WTC11 (cell line): ENCODE measurements at regions of chrX and their contacts with region 1.

Region 1: GRCh38 chrX:49155900-49156837 is 6.4 kb upstream of the MAGIX start:
- DNase-seq: peak; percentile 82
- ATAC-seq: peak; percentile 90
- H3K4me3 Mint-ChIP-seq: peak overlapping the region; percentile 80
- H3K27ac Mint-ChIP-seq: peak overlapping the region; percentile 94
- H3K4me1 Mint-ChIP-seq: peaks cover 9% of the 10 kb centered on the region
- H3K27me3 Mint-ChIP-seq: peaks cover 39% of the 10 kb centered on the region
- CTCF ChIP-seq: peak; percentile 31; the same call in 1 of the 2 replicates

Region 2: GRCh38 chrX:49137492-49137891 is 18.7 kb before region 1 on chrX:
- CTCF ChIA-PET with region 1: interaction called, 29 read pairs
- POLR2A ChIA-PET with region 1: no interaction called
- DNase-seq: no peak
- ATAC-seq: no peak
- H3K4me3 Mint-ChIP-seq: no peak overlapping the region
- H3K27ac Mint-ChIP-seq: no peak overlapping the region
- H3K4me1 Mint-ChIP-seq: no peaks in the 10 kb centered on the region
- H3K27me3 Mint-ChIP-seq: peaks cover 3% of the 10 kb centered on the region; the same call in 1 of the 2 replicates
- CTCF ChIP-seq: no peak

Region 3: GRCh38 chrX:49165901-49166881 is 10.0 kb after region 1 on chrX:
- CTCF ChIA-PET with region 1: interaction called, 24 read pairs
- POLR2A ChIA-PET with region 1: interaction called, 5 read pairs
- DNase-seq: peak; percentile 89
- ATAC-seq: peak; percentile 63
- H3K4me3 Mint-ChIP-seq: peak overlapping the region; percentile 66
- H3K27ac Mint-ChIP-seq: 0 out of 2 replicates have a peak overlapping the region, but pooled peaks have one; percentile 58
- H3K4me1 Mint-ChIP-seq: peaks cover 13% of the 10 kb centered on the region
- H3K27me3 Mint-ChIP-seq: peaks cover 65% of the 10 kb centered on the region
- CTCF ChIP-seq: no peak

Region 4: GRCh38 chrX:49184294-49185061 is 28.3 kb after region 1 on chrX:
- CTCF ChIA-PET with region 1: interaction called, 11 read pairs
- POLR2A ChIA-PET with region 1: no interaction called
- DNase-seq: peak; percentile 97
- ATAC-seq: peak; percentile 88
- H3K4me3 Mint-ChIP-seq: peak overlapping the region; percentile 77
- H3K27ac Mint-ChIP-seq: peak overlapping the region; percentile 95
- H3K4me1 Mint-ChIP-seq: peaks cover 17% of the 10 kb centered on the region
- H3K27me3 Mint-ChIP-seq: no peaks in the 10 kb centered on the region; the same call in 1 of the 2 replicates
- CTCF ChIP-seq: no peak